Naive thymus-derived CD4-positive, alpha-beta T cell (primary cell): ENCODE measurements at regions of chr7 and their contacts with region 1.

Region 1: GRCh38 chr7:1986366-1987083 is 246.2 kb downstream of the MAD1L1 start:
- DNase-seq: peak in 7 of 9 donors; percentile 17 to 83 (median 69)
- ATAC-seq: peak; percentile 71
- H3K4me3 ChIP-seq: no peak overlapping the region
- H3K4me3 Mint-ChIP-seq: peak overlapping the region; percentile 26 to 83 (median 71)
- H3K27ac ChIP-seq: peak overlapping the region; percentile 66
- H3K27ac Mint-ChIP-seq: peak overlapping the region; percentile 90 to 99 (median 95)
- H3K4me1 ChIP-seq: peaks cover 25 to 33% of the 10 kb centered on the region in 2 donors
- H3K4me1 Mint-ChIP-seq: peaks cover 13 to 47% (median 38%) of the 10 kb centered on the region in 7 donors
- H3K27me3 ChIP-seq: no peaks in the 10 kb centered on the region
- H3K27me3 Mint-ChIP-seq: no peaks in the 10 kb centered on the region

Region 2: GRCh38 chr7:1969459-1970284 is 16.9 kb before region 1 on chr7:
- CTCF ChIA-PET with region 1: no interaction called
- POLR2A ChIA-PET with region 1: no interaction called
- intact Hi-C with region 1: no loop called
- DNase-seq: peak in 1 of 9 donors; percentile 18
- ATAC-seq: no peak
- H3K4me3 ChIP-seq: no peak overlapping the region
- H3K4me3 Mint-ChIP-seq: peak overlapping the region; percentile 17 to 73 (median 54)
- H3K27ac ChIP-seq: no peak overlapping the region
- H3K27ac Mint-ChIP-seq: peak overlapping the region; percentile 44 to 93 (median 79)
- H3K4me1 ChIP-seq: peaks cover 0 to 12% of the 10 kb centered on the region in 2 donors
- H3K4me1 Mint-ChIP-seq: peaks cover 20 to 55% (median 42%) of the 10 kb centered on the region in 7 donors
- H3K27me3 ChIP-seq: no peaks in the 10 kb centered on the region
- H3K27me3 Mint-ChIP-seq: no peaks in the 10 kb centered on the region

Region 3: GRCh38 chr7:2032030-2032875 is 45.7 kb after region 1 on chr7:
- CTCF ChIA-PET with region 1: no interaction called
- POLR2A ChIA-PET with region 1: no interaction called
- intact Hi-C with region 1: loop called in 1 of 2 experiments (anchors 5 kb)
- DNase-seq: peak in 1 of 9 donors; percentile 4
- ATAC-seq: no peak
- H3K4me3 ChIP-seq: no peak overlapping the region
- H3K4me3 Mint-ChIP-seq: peak overlapping the region in 1 of 10 donors; percentile 64
- H3K27ac ChIP-seq: no peak overlapping the region
- H3K27ac Mint-ChIP-seq: peak overlapping the region in 2 of 9 donors; percentile 32 to 65
- H3K4me1 ChIP-seq: peaks cover 17 to 21% of the 10 kb centered on the region in 2 donors
- H3K4me1 Mint-ChIP-seq: peaks cover 23 to 44% (median 36%) of the 10 kb centered on the region in 7 donors
- H3K27me3 ChIP-seq: no peaks in the 10 kb centered on the region
- H3K27me3 Mint-ChIP-seq: no peaks in the 10 kb centered on the region